ENCODE measurements at regions of chr1 and their contacts with region 1.

Region 1: GRCh38 chr1:182595641-182596240 is 6.7 kb upstream of the RNASEL start:
- DNase-seq: peak in 1 of 2 experiments; percentile 90
- H3K4me3 ChIP-seq: no peak overlapping the region
- H3K27ac ChIP-seq: no peak overlapping the region
- H3K4me1 ChIP-seq: no peaks in the 10 kb centered on the region
- H3K27me3 ChIP-seq: no peaks in the 10 kb centered on the region
- CTCF ChIP-seq: peak; percentile 78 to 92 (median 87)
- EP300 ChIP-seq: no peak
- POLR2A ChIP-seq: no peak
- RAD21 ChIP-seq: peak; percentile 84 to 89

Region 2: DNA sequence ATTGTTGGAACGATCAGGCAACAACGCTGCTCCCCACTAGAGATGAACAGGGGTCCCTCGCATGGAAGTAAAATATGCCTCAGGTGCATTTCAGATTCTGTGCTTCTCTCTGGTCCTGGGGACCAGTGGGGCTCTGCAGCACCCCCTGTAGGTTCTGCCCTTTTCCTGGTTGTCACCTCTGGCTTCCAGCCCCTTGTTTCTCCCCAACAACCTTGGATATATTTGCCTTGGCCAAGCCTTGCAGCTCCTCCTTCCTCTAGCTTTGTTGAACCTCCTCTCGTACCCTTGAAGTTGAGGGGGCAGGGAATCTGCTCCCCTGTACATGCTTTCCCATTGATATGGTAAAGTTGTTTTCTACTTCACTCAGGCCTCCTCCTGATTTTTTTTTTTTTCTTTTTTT is 151.2 kb before region 1 on chr1:
- CTCF ChIA-PET with region 1: interaction called, 12 read pairs
- POLR2A ChIA-PET with region 1: interaction called, 4 read pairs
- DNase-seq: peak in 1 of 2 experiments; percentile 49
- H3K4me3 ChIP-seq: no peak overlapping the region; a peak in 1 of 8 replicates
- H3K27ac ChIP-seq: no peak overlapping the region
- H3K4me1 ChIP-seq: peaks cover 0 to 8% (median 3%) of the 10 kb centered on the region in 4 experiments; a peak in 4 of 7 replicates
- H3K27me3 ChIP-seq: no peaks in the 10 kb centered on the region
- CTCF ChIP-seq: peak in 2 of 3 experiments; percentile 31 to 35; a peak in 3 of 4 replicates
- EP300 ChIP-seq: no peak
- POLR2A ChIP-seq: no peak
- RAD21 ChIP-seq: no peak; a peak in 1 of 4 replicates

Region 3: DNA sequence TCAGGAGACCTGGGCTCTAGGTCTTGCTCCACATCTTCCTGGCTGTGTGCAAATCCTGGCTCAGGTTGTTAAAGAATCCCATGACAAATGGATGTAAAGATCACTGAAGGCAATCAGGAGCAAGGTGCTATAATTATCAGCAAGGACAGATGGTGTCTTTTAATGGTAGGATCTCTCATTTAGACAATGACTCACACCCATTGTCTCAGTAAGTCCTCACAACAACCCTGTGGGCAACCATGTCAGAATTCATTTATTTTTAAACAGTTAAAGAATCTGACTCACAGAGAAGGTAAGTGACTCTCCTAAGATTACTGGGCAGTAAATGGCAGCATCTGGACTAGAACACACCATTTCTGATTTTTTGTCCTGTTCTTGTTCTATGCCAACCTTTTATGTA is 39.5 kb before region 1 on chr1:
- CTCF ChIA-PET with region 1: no interaction called
- POLR2A ChIA-PET with region 1: no interaction called
- DNase-seq: no peak
- H3K4me3 ChIP-seq: no peak overlapping the region
- H3K27ac ChIP-seq: no peak overlapping the region
- H3K4me1 ChIP-seq: no peaks in the 10 kb centered on the region
- H3K27me3 ChIP-seq: no peaks in the 10 kb centered on the region
- CTCF ChIP-seq: no peak
- EP300 ChIP-seq: no peak
- POLR2A ChIP-seq: no peak
- RAD21 ChIP-seq: no peak

Region 4: GRCh38 chr1:182674346-182675246 is 78.9 kb after region 1 on chr1:
- CTCF ChIA-PET with region 1: interaction called, 10 read pairs
- POLR2A ChIA-PET with region 1: interaction called, 3 read pairs
- DNase-seq: no peak
- H3K4me3 ChIP-seq: no peak overlapping the region
- H3K27ac ChIP-seq: no peak overlapping the region
- H3K4me1 ChIP-seq: peaks cover 6 to 15% (median 7%) of the 10 kb centered on the region in 4 experiments
- H3K27me3 ChIP-seq: peaks cover 0 to 4% (median 0%) of the 10 kb centered on the region in 4 experiments; a peak in 1 of 7 replicates
- CTCF ChIP-seq: no peak
- EP300 ChIP-seq: no peak
- POLR2A ChIP-seq: no peak
- RAD21 ChIP-seq: no peak; a peak in 1 of 4 replicates

Region 5: DNA sequence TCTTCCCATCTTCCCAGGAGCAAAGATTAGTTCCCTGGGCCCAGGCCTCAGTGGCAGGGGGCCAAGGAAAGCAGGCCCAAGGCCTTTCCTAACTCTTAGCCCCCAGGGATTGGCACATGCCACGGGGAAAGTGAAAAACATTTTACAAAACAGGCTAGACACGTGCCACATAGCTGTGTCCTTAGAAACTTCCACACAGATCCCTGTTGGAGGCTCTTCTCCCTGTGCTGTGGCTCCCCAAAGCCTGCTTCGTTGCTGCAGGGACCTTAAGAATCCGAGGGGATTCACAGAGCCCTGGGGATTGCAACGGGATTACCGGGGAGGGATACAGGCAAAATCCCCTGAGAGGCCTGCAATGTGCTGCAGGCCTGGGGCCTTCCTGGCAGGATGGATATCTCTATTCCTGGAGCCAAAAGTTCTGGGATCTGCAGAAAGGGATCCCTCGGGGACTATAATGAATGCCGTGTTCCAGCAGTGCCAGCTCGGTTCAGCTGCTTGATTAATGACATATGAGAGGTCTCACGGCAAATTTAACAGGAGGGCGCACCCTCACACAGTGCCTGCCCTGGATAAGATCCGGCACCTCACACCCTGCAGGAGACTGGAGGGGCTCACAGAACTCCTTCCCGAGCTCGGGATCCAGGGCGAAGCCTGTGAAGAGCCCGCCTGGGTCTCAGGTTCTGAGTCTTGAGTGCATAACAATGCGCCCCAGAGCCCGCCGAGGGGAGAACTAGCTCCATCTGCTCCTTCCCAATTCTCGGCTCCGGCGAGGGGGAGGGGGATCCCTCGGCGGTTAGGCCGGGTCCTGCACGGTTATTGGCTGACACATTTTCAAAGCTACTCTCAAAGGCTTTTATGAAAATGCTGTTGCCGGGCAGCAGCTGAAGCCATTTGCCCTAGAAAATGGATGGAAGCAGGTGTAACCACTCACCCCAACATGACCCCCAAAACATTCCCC is 103.9 kb after region 1 on chr1:
- CTCF ChIA-PET with region 1: interaction called, 44 read pairs
- POLR2A ChIA-PET with region 1: interaction called, 10 read pairs
- DNase-seq: peak; percentile 50 to 86
- H3K4me3 ChIP-seq: peak overlapping the region; percentile 16 to 53 (median 27); a peak in 7 of 8 replicates
- H3K27ac ChIP-seq: peak overlapping the region; percentile 59
- H3K4me1 ChIP-seq: peaks cover 10 to 32% (median 16%) of the 10 kb centered on the region in 4 experiments
- H3K27me3 ChIP-seq: no peaks in the 10 kb centered on the region
- CTCF ChIP-seq: no peak
- EP300 ChIP-seq: no peak; a peak in 1 of 3 replicates
- POLR2A ChIP-seq: peak in 1 of 2 experiments; percentile 49; a peak in 1 of 3 replicates
- RAD21 ChIP-seq: peak in 1 of 2 experiments; percentile 38; a peak in 2 of 4 replicates

Region 6: GRCh38 chr1:182806015-182806678 is 210.4 kb after region 1 on chr1:
- CTCF ChIA-PET with region 1: interaction called, 1,131 read pairs
- POLR2A ChIA-PET with region 1: no interaction called
- DNase-seq: peak; percentile 71 to 84
- H3K4me3 ChIP-seq: no peak overlapping the region
- H3K27ac ChIP-seq: no peak overlapping the region
- H3K4me1 ChIP-seq: peaks cover 3 to 11% (median 7%) of the 10 kb centered on the region in 4 experiments; a peak in 6 of 7 replicates
- H3K27me3 ChIP-seq: no peaks in the 10 kb centered on the region
- CTCF ChIP-seq: peak; percentile 83 to 86 (median 85)
- EP300 ChIP-seq: peak in 1 of 2 experiments; percentile 97; a peak in 1 of 3 replicates
- POLR2A ChIP-seq: no peak
- RAD21 ChIP-seq: peak; percentile 95

Measured in H1 (cell line).